Prostate gland (tissue), 2 donors: ENCODE measurements at regions of chr15 and their contacts with region 1.

Region 1: GRCh38 chr15:98727115-98728085 is 79.1 kb downstream of the IGF1R start:
- DNase-seq: peak; percentile 87
- H3K4me3 ChIP-seq: no peak overlapping the region
- H3K27ac ChIP-seq: peak overlapping the region; percentile 87 to 91
- H3K4me1 ChIP-seq: peaks cover 26% of the 10 kb centered on the region
- H3K27me3 ChIP-seq: no peaks in the 10 kb centered on the region
- CTCF ChIP-seq: no peak
- POLR2A ChIP-seq: no peak

Region 2: DNA sequence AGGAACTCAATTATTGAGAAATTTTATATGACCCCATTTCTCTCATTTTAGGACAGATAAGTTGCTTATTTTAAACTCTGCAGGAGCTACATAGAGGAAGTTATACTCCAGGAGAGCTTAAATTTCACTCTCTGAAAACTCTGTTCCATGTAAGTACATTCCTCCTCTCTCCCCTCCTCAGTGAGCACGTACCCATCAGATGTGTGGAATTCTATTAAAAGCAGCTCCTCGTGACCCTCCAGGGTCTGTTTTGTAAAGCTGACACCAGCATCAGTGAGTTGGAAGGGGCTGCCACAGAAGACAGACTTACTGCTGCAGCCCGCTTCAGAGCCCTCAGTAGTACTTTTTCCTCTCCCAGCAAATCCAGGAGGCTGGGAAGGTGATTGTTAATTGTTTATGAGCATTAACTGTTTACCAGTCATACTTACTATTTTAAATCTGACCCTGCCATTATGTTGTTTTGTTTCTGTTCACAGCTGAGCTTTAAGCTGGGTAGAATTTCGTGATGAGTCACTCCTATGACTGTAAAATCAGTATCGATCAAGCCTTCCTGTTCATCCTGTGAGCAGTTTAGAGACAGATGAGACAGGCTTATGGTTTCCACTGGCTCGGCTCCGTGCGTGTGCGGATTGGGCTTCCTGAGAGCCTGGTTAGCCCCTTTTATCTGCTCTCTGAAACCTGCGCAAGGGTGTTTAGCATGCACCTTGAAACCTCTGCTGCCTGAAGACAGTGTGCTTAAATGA is 58.7 kb before region 1 on chr15:
- intact Hi-C with region 1: loop called (anchors 10 kb)
- DNase-seq: no peak
- H3K4me3 ChIP-seq: no peak overlapping the region
- H3K27ac ChIP-seq: peak overlapping the region in 1 of 2 donors; percentile 36
- H3K4me1 ChIP-seq: peaks cover 9% of the 10 kb centered on the region
- H3K27me3 ChIP-seq: no peaks in the 10 kb centered on the region
- CTCF ChIP-seq: no peak
- POLR2A ChIP-seq: no peak

Region 3: DNA sequence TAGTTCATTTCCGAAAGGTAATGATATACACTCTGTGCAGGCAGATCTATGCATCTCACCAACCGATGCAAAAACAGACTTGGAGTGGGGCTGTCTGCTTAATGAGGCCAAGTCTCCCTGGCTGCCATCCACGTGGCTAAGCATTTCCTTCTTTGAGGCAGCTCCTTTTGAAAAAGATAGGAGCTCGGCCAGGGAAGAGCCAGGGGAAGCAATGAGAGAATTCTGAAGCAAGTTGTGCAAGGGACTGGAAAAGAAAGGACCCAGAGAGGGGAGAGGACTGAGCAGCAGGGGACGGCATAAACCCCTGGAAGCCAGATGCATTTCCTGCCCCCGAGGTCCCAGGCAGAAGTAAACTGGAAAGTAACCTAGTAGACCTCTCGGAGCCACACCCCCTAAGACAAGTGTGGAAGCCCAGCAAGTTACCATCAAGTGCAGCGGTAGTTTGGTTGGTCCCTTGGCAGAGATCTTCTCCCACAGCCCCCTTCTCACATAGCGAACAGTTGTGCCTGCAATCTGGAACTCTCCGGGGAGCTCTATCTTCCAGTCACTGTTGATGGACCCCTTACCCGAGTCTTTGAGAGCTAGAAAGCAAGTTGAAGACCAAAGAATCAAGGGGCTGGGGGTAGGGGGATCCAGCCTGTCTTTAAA is 1326.2 kb after region 1 on chr15:
- intact Hi-C with region 1: no loop called
- DNase-seq: no peak
- H3K4me3 ChIP-seq: no peak overlapping the region
- H3K27ac ChIP-seq: no peak overlapping the region
- H3K4me1 ChIP-seq: no peaks in the 10 kb centered on the region
- H3K27me3 ChIP-seq: no peaks in the 10 kb centered on the region
- CTCF ChIP-seq: no peak
- POLR2A ChIP-seq: no peak